H1 (cell line): ENCODE measurements at regions of chrX and their contacts with region 1.

Region 1: GRCh38 chrX:48917139-48918001 is 1.5 kb downstream of the PIM2 start:
- DNase-seq: peak; percentile 68 to 80
- H3K4me3 ChIP-seq: peak overlapping the region; percentile 72 to 96 (median 88)
- H3K27ac ChIP-seq: peak overlapping the region; percentile 58; the same call in 1 of the 2 replicates
- H3K4me1 ChIP-seq: peaks cover 8 to 15% (median 14%) of the 10 kb centered on the region in 4 experiments
- H3K27me3 ChIP-seq: no peaks in the 10 kb centered on the region
- CTCF ChIP-seq: peak in 2 of 3 experiments; percentile 74 to 82; a peak in 3 of 4 replicates
- EP300 ChIP-seq: no peak
- POLR2A ChIP-seq: peak in 1 of 2 experiments; percentile 16; a peak in 1 of 3 replicates
- RAD21 ChIP-seq: peak; percentile 40 to 54; a peak in 3 of 4 replicates

Region 2: GRCh38 chrX:48776818-48777439 is 140.4 kb before region 1 on chrX:
- CTCF ChIA-PET with region 1: no interaction called
- POLR2A ChIA-PET with region 1: no interaction called
- DNase-seq: no peak
- H3K4me3 ChIP-seq: no peak overlapping the region
- H3K27ac ChIP-seq: no peak overlapping the region
- H3K4me1 ChIP-seq: no peaks in the 10 kb centered on the region
- H3K27me3 ChIP-seq: no peaks in the 10 kb centered on the region
- CTCF ChIP-seq: no peak
- EP300 ChIP-seq: no peak
- POLR2A ChIP-seq: no peak
- RAD21 ChIP-seq: no peak

Region 3: GRCh38 chrX:48937054-48937907 is 19.9 kb after region 1 on chrX:
- CTCF ChIA-PET with region 1: interaction called, 13 read pairs
- POLR2A ChIA-PET with region 1: interaction called, 572 read pairs
- DNase-seq: peak in 1 of 2 experiments; percentile 52
- H3K4me3 ChIP-seq: peak overlapping the region in 1 of 4 experiments; percentile 42; a peak in 2 of 8 replicates
- H3K27ac ChIP-seq: peak overlapping the region; percentile 68
- H3K4me1 ChIP-seq: peaks cover 0 to 12% (median 3%) of the 10 kb centered on the region in 4 experiments; a peak in 6 of 7 replicates
- H3K27me3 ChIP-seq: no peaks in the 10 kb centered on the region
- CTCF ChIP-seq: peak; percentile 27 to 79 (median 77)
- EP300 ChIP-seq: no peak
- POLR2A ChIP-seq: no peak; a peak in 1 of 3 replicates
- RAD21 ChIP-seq: peak; percentile 74 to 82

Region 4: DNA sequence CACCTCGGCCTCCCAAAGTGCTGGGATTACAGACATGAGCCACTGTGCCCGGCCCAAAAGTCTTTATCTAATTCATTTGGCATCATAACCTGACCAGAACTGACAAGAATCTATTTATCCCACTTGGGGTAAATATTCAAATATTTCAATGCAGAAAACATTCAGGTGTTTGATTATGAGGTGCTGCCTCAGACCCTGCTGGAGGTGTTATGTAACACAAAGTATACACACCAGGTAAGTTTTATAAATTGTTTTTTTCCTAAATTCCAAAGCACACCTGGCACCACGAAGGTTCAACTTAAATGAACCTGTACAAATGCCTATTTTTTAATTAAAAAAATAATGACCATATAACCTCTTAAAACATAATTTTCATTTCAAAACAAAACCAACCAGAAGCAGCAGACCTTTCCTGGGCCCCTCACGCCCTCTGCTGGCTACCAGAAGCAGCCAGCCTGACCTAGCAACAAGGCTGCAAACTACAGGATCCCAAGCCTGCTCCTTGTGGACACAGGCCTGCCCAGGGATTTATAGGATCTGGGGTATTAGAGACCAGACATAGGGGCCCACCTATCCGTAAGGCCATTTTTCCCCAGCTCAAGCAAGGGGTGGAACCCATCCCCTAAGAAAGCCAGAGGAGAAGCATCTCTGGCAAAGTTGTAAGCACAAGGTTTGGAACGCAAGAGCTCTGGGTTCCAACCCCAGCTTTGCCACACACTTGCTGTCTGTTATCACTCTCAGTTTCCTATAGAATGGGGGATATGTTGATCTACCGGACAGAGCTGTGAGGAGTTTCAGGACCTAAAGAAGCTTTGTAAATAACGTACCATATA is 28.4 kb after region 1 on chrX:
- CTCF ChIA-PET with region 1: interaction called, 13 read pairs
- POLR2A ChIA-PET with region 1: interaction called, 572 read pairs
- DNase-seq: peak in 1 of 2 experiments; percentile 47
- H3K4me3 ChIP-seq: no peak overlapping the region
- H3K27ac ChIP-seq: no peak overlapping the region
- H3K4me1 ChIP-seq: 0 out of 7 replicates have a peak, but pooled peaks cover 0 to 2% (median 0%) of the 10 kb centered on the region in 4 experiments
- H3K27me3 ChIP-seq: no peaks in the 10 kb centered on the region
- CTCF ChIP-seq: peak; percentile 69 to 81 (median 78)
- EP300 ChIP-seq: no peak
- POLR2A ChIP-seq: no peak
- RAD21 ChIP-seq: peak; percentile 69 to 81